Left cardiac atrium (tissue), 4 donors: ENCODE measurements at regions of chr16 and their contacts with region 1.

Region 1: GRCh38 chr16:4239020-4239419 is 2.9 kb downstream of the SRL start:
- DNase-seq: peak; percentile 61
- ATAC-seq: peak; percentile 46 to 54

Region 2: GRCh38 chr16:4200000-4200780 is 38.8 kb before region 1 on chr16:
- intact Hi-C with region 1: loop called in 1 of 2 experiments (anchors 5 kb)
- DNase-seq: peak; percentile 59
- ATAC-seq: peak; percentile 86 to 87

Region 3: GRCh38 chr16:4556112-4556511 is 317.1 kb after region 1 on chr16 and contains the start of gene C16orf96:
- intact Hi-C with region 1: no loop called
- DNase-seq: no peak
- ATAC-seq: no peak
- total RNA-seq, gene C16orf96: 0.10 TPM in 1 of 2 donors, not detected in the other